ENCODE measurements at regions of chr1 and their contacts with region 1.

Region 1: GRCh38 chr1:10507111-10507879 is 32.5 kb downstream of the PEX14 start:
- DNase-seq: peak; percentile 27
- H3K4me3 Mint-ChIP-seq: no peak overlapping the region
- H3K27ac Mint-ChIP-seq: no peak overlapping the region
- H3K4me1 Mint-ChIP-seq: peaks cover 41% of the 10 kb centered on the region
- H3K27me3 Mint-ChIP-seq: no peaks in the 10 kb centered on the region

Region 2: GRCh38 chr1:10585948-10586524 is 78.7 kb after region 1 on chr1:
- intact Hi-C with region 1: loop called (anchors 5 kb)
- DNase-seq: no peak
- H3K4me3 Mint-ChIP-seq: no peak overlapping the region
- H3K27ac Mint-ChIP-seq: no peak overlapping the region
- H3K4me1 Mint-ChIP-seq: peaks cover 5% of the 10 kb centered on the region
- H3K27me3 Mint-ChIP-seq: no peaks in the 10 kb centered on the region

Region 3: DNA sequence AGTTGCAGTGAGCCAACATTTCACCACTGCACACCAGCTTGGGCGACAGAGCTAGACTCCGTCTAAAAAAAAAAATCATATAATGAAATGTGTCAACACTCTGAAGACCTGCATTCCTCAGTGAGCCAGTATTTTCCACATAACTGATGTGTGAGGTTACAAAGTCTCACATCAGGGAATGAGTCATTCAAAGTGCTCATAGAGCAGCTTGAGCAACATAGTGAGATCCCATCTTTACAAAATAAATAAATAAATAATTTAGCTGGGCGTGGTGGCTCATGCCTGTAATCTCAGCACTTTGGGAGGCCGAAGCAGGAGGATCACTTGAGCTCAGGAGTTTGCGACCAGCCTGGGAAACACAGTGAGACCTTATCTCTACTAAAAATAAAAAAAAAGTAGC is 223.7 kb after region 1 on chr1:
- intact Hi-C with region 1: loop called (anchors 1 kb)
- DNase-seq: no peak
- H3K4me3 Mint-ChIP-seq: no peak overlapping the region
- H3K27ac Mint-ChIP-seq: no peak overlapping the region
- H3K4me1 Mint-ChIP-seq: peaks cover 6% of the 10 kb centered on the region
- H3K27me3 Mint-ChIP-seq: peaks cover 13% of the 10 kb centered on the region

Region 4: DNA sequence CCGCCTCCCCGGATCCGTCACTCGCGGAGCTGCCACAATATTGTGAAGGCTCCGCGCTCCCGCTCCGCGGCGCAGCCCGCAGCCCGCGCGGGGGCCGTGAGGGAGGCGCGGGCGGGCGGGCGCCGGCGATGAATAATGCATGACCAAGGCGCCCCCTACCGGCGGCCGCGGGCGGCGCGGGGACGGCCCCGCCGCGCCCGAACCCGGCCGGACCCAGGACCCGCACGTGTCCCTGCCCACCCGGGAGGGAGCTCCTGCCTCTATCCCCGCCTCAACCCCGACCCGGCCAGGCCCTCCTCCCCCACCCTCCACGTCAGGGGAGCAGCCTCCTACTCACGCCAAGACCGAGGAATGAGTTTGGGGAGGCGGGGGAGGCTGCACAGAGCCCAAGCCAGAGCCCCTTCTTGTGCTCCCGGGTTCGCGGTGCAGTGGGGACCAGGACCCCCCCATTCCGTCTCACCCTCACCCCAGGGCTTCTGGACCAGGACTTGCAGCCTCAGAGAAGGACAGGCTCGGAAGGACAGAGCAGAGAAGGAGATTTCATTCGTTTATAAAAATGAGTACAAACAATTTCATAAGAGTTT is 359.9 kb after region 1 on chr1:
- intact Hi-C with region 1: loop called (anchors 1 kb)
- DNase-seq: peak; percentile 48
- H3K4me3 Mint-ChIP-seq: peak overlapping the region; percentile 35
- H3K27ac Mint-ChIP-seq: no peak overlapping the region
- H3K4me1 Mint-ChIP-seq: peaks cover 5% of the 10 kb centered on the region
- H3K27me3 Mint-ChIP-seq: peaks cover 67% of the 10 kb centered on the region

Region 5: GRCh38 chr1:11012250-11013171 is 505.2 kb after region 1 on chr1 and contains the start of gene TARDBP:
- intact Hi-C with region 1: loop called (anchors 1 kb)
- DNase-seq: peak; percentile 88
- H3K4me3 Mint-ChIP-seq: peak within 1 kb of the TSS; percentile 94
- H3K27ac Mint-ChIP-seq: peak within 1 kb of the TSS; percentile 98
- H3K4me1 Mint-ChIP-seq: peaks cover 18% of the 10 kb centered on the region
- H3K27me3 Mint-ChIP-seq: no peaks in the 10 kb centered on the region
- total RNA-seq, gene TARDBP: 197 TPM in 2 replicates